OCI-LY7 (cell line): ENCODE measurements at regions of chr7 and their contacts with region 1.

Region 1: DNA sequence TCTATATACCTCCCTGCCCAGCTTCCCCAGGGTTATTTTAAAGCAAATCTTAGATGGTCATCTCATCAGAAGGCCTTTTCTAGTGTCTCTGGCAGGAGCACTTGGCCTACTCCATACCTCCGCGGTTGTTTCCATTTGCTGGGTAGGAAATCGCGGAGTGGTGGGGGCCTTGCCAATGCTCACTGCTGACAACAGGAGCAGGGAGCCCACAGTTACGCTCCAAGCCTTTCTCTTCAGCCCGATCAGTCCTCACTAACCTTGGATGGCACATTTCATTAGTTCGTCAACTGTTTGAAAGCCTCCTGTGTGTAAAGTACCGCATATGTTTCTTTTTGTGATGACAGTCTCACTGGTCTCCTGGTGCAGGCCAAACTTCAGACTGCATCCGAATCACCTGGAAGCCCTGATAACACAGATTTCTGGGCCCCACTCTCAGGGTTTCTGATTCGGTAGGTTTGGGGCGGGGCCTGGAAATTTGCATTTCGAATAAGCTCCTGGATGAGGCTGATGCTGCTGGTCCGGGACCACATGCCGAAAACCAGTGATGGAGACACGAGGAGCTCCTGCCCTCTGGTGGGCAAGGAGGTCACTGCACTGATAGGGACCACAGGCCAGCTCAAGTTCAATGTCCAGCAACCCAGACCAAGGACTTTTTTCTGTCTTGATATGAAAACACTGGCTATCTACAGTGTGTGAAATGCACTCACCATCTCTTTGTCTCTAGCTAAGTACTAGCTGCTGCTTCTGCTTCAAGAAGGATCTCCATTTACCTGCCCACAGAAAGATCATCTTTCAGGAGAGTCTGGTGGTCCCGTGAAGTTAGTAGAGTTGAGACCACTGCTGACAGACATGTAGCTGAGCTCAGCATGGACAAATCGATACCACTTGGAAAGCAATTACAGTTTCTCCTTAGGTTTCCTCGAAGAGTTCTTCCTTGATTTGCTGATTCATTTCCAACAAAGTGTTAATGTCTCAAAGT is 14.0 kb downstream of the LRGUK start:
- DNase-seq: peak; percentile 69
- H3K4me3 ChIP-seq: no peak overlapping the region
- H3K27ac ChIP-seq: no peak overlapping the region
- H3K4me1 ChIP-seq: no peaks in the 10 kb centered on the region
- CTCF ChIP-seq: peak; percentile 94

Region 2: DNA sequence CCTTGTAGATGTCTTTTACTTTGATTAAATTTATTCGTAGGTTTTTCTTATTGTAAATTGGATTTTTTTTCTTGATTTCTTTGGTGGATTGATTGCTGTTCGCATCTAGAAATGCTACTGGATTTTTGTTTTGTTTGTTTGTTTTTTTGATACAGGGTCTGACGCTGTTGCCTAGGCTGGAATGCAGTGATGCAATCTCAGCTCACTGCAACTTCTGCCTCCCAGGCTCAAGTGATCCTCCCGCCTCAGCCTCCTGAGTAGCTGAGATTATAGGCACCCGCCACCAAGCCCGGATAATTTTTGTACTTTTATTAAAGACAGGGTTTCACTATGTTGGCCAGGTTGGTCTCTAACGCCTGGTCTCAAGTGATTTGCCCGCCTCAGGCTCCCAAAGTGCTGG is 149.0 kb before region 1 on chr7:
- CTCF ChIA-PET with region 1: no interaction called
- POLR2A ChIA-PET with region 1: no interaction called
- intact Hi-C with region 1: loop called (anchors 2 kb)
- DNase-seq: no peak
- H3K4me3 ChIP-seq: no peak overlapping the region
- H3K27ac ChIP-seq: no peak overlapping the region
- H3K4me1 ChIP-seq: no peaks in the 10 kb centered on the region
- CTCF ChIP-seq: no peak

Region 3: DNA sequence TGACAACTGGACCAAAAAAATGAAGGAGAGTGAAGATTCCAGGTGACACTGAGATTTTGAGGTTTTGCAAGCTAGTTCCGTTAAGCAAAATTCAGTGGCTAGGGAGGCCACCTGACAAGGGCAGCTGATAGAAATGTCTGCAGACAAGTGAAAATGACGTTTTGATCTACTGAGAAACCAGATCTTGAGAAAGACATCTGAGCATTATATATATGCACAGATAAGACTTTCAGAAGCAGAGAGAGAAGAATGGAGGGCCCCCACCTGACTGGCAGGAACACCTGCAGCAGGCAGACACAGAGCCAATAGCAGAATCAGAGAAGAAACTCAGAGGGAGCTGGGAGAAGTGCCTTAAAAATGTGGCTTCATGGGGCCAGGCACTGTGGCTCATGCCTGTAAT is 90.2 kb before region 1 on chr7:
- CTCF ChIA-PET with region 1: interaction called, 5 read pairs
- POLR2A ChIA-PET with region 1: interaction called, 3 read pairs
- intact Hi-C with region 1: loop called (anchors 2 kb)
- DNase-seq: peak; percentile 71
- H3K4me3 ChIP-seq: no peak overlapping the region
- H3K27ac ChIP-seq: peak overlapping the region; percentile 83
- H3K4me1 ChIP-seq: peaks cover 64% of the 10 kb centered on the region
- CTCF ChIP-seq: no peak

Region 4: GRCh38 chr7:134114992-134115391 is 26.2 kb before region 1 on chr7:
- CTCF ChIA-PET with region 1: no interaction called
- POLR2A ChIA-PET with region 1: no interaction called
- intact Hi-C with region 1: no loop called
- DNase-seq: no peak
- H3K4me3 ChIP-seq: no peak overlapping the region
- H3K27ac ChIP-seq: no peak overlapping the region
- H3K4me1 ChIP-seq: no peaks in the 10 kb centered on the region
- CTCF ChIP-seq: no peak

Region 5: GRCh38 chr7:134197345-134197744 is 56.2 kb after region 1 on chr7:
- CTCF ChIA-PET with region 1: no interaction called
- POLR2A ChIA-PET with region 1: no interaction called
- intact Hi-C with region 1: no loop called
- DNase-seq: no peak
- H3K4me3 ChIP-seq: no peak overlapping the region
- H3K27ac ChIP-seq: no peak overlapping the region
- H3K4me1 ChIP-seq: no peaks in the 10 kb centered on the region
- CTCF ChIP-seq: no peak

Region 6: GRCh38 chr7:134327896-134328295 is 186.7 kb after region 1 on chr7:
- CTCF ChIA-PET with region 1: interaction called, 5 read pairs
- POLR2A ChIA-PET with region 1: no interaction called
- intact Hi-C with region 1: loop called (anchors 1 kb)
- DNase-seq: peak; percentile 84
- H3K4me3 ChIP-seq: no peak overlapping the region
- H3K27ac ChIP-seq: no peak overlapping the region
- H3K4me1 ChIP-seq: no peaks in the 10 kb centered on the region
- CTCF ChIP-seq: peak; percentile 91